ENCODE measurements at regions of chr5 and their contacts with region 1.

Region 1: DNA sequence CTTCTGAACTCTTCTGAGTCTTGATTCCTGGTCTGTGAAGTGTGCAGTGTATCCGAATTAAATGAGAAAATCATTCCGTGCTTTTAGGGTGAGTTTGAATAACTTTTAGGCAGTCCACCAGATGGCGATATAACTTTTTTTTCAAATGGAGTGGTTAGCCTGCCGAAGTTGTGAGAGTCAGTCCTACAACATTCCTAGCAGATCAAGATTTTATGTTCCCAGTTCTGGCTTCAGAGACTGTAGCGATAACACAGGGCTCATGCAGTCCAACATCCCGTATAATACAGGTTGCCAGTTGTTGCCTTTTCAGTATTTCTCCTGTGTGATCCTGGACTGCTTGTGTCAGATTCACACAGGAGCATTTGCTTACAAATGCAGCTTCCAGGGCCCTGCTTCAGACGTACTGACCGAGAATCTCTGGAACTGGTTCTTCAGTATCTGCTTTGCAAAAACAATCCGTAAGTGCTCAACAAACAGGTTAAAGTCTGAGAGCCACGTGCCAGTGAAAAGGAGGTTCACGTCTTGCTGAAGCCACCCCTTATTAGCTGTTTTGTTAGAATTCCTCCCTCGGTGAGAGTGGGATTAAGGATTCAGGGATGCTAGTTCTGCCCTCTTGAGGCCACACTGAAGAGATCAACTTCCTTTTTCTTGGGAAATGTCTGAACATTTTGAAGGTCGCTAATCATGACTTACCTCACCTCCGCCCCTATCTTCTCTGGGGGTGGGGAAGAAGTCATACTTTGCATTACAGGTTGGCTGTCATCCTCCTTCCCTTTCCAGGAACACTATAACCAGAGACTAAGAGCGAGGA is 22.8 kb downstream of the SMIM3 start:
- DNase-seq: no peak
- ATAC-seq: no peak
- H3K4me3 Mint-ChIP-seq: no peak overlapping the region
- H3K27ac Mint-ChIP-seq: no peak overlapping the region
- H3K4me1 Mint-ChIP-seq: no peaks in the 10 kb centered on the region
- H3K27me3 Mint-ChIP-seq: peaks cover 18% of the 10 kb centered on the region
- CTCF ChIP-seq: no peak

Region 2: GRCh38 chr5:150836064-150836463 is 34.7 kb after region 1 on chr5:
- CTCF ChIA-PET with region 1: no interaction called
- POLR2A ChIA-PET with region 1: no interaction called
- intact Hi-C with region 1: no loop called
- DNase-seq: no peak
- ATAC-seq: no peak
- H3K4me3 Mint-ChIP-seq: no peak overlapping the region
- H3K27ac Mint-ChIP-seq: no peak overlapping the region
- H3K4me1 Mint-ChIP-seq: no peaks in the 10 kb centered on the region
- H3K27me3 Mint-ChIP-seq: no peaks in the 10 kb centered on the region
- CTCF ChIP-seq: no peak

Region 3: DNA sequence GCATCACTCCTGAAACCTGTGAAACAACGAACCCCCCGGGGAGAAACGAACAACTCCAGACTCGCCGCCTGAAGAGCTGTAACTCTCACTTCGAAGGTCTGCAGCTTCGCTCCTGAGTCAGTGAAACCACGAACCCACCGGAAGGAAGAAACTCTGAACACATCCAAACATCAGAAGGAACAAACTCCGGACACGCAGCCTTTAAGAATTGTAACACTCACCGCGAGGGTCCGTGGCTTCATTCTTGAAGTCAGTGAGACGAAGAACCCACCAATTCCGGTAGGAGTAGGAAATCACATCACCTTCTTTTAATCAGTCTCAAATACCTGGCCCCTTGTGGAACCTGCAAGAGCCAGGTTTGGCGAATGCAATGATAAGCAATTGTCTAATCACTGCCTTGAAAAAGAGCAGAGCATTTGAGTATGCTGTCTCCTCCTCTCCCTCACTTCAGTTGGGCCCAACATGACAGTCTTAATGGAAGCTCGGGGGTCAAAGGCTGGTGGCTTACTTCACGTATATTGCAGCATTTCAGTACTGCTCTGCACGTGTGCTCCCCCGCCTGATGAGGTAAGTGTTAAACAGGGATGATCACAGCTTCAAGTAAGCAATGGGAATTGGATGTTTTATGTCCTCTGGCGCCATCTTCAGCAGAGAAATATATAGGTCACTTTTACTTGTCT is 45.5 kb after region 1 on chr5:
- CTCF ChIA-PET with region 1: interaction called, 52 read pairs
- POLR2A ChIA-PET with region 1: interaction called, 4 read pairs
- intact Hi-C with region 1: loop called (anchors 1 kb)
- DNase-seq: no peak
- ATAC-seq: peak; percentile 96
- H3K4me3 Mint-ChIP-seq: peak overlapping the region; percentile 81
- H3K27ac Mint-ChIP-seq: peak overlapping the region; percentile 55
- H3K4me1 Mint-ChIP-seq: peaks cover 10% of the 10 kb centered on the region
- H3K27me3 Mint-ChIP-seq: no peaks in the 10 kb centered on the region
- CTCF ChIP-seq: no peak

Region 4: GRCh38 chr5:151298063-151298855 is 496.9 kb after region 1 on chr5:
- CTCF ChIA-PET with region 1: no interaction called
- POLR2A ChIA-PET with region 1: no interaction called
- intact Hi-C with region 1: loop called (anchors 5 kb)
- DNase-seq: no peak
- ATAC-seq: peak; percentile 58
- H3K4me3 Mint-ChIP-seq: no peak overlapping the region
- H3K27ac Mint-ChIP-seq: no peak overlapping the region
- H3K4me1 Mint-ChIP-seq: peaks cover 4% of the 10 kb centered on the region
- H3K27me3 Mint-ChIP-seq: peaks cover 15% of the 10 kb centered on the region
- CTCF ChIP-seq: no peak